Naive thymus-derived CD4-positive, alpha-beta T cell (primary cell): ENCODE measurements at regions of chr2 and their contacts with region 1.

Region 1: DNA sequence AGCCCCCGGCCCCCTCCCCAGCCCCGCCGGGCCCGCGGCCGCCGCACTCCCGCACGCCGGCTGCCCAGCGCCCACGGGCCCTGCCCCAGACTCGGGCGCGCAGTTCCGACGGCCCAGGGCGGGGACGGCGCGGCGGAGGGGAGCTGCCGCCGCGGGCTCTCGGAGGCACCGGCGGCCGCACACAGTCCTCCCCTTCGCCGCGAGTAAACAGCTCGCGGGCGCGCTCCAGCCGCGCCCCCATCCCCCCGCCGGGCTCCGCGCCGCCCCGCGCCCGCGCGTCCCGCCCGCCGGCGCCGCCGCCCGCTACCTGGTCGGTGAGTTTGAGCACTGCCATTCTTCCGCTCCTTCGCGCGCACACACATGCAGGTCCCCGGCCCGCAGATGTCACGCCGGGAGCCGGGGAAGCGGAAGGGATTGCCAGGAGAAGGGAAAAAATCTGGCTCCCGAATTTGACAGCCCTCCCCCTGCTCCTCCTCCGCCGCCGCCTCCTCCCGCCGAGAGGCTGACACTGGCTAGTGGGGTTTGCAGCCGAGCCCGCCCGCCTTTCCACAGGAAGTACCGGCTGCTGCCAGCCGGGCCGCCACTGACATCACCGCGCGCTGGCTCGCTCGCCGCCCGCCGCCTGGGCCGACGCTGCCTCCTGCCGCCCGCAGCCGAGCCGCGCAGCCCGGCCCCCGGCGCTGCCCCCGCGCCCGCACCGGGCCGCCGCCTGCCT is at the start of gene ANKRD44:
- DNase-seq: peak; percentile 86 to 94 (median 91)
- ATAC-seq: peak; percentile 88
- H3K4me3 ChIP-seq: peak within 1 kb of the TSS; percentile 90
- H3K4me3 Mint-ChIP-seq: peak within 1 kb of the TSS; percentile 89 to 98 (median 94)
- H3K27ac ChIP-seq: peak within 1 kb of the TSS; percentile 85
- H3K27ac Mint-ChIP-seq: peak within 1 kb of the TSS; percentile 93 to 99 (median 95)
- H3K4me1 ChIP-seq: peaks cover 34 to 43% of the 10 kb centered on the region in 2 donors
- H3K4me1 Mint-ChIP-seq: peaks cover 35 to 74% (median 68%) of the 10 kb centered on the region in 7 donors
- H3K27me3 ChIP-seq: no peaks in the 10 kb centered on the region
- H3K27me3 Mint-ChIP-seq: no peaks in the 10 kb centered on the region
- total RNA-seq, gene ANKRD44: 234 to 296 (median 291) TPM

Region 2: GRCh38 chr2:197052356-197052755 is 258.1 kb before region 1 on chr2:
- CTCF ChIA-PET with region 1: no interaction called
- POLR2A ChIA-PET with region 1: no interaction called
- intact Hi-C with region 1: no loop called
- DNase-seq: no peak
- ATAC-seq: peak; percentile 56
- H3K4me3 ChIP-seq: no peak overlapping the region
- H3K4me3 Mint-ChIP-seq: no peak overlapping the region
- H3K27ac ChIP-seq: no peak overlapping the region
- H3K27ac Mint-ChIP-seq: peak overlapping the region in 4 of 9 donors; percentile 14 to 51 (median 27)
- H3K4me1 ChIP-seq: no peaks in the 10 kb centered on the region
- H3K4me1 Mint-ChIP-seq: peaks cover 0 to 8% (median 0%) of the 10 kb centered on the region in 7 donors
- H3K27me3 ChIP-seq: no peaks in the 10 kb centered on the region
- H3K27me3 Mint-ChIP-seq: no peaks in the 10 kb centered on the region

Region 3: GRCh38 chr2:197113275-197113711 is 197.1 kb before region 1 on chr2:
- CTCF ChIA-PET with region 1: interaction called, 24 read pairs
- POLR2A ChIA-PET with region 1: interaction called, 4 read pairs
- intact Hi-C with region 1: loop called (anchors 1 kb)
- DNase-seq: peak in 7 of 9 donors; percentile 22 to 58 (median 42)
- ATAC-seq: peak; percentile 70
- H3K4me3 ChIP-seq: no peak overlapping the region
- H3K4me3 Mint-ChIP-seq: no peak overlapping the region
- H3K27ac ChIP-seq: peak overlapping the region; percentile 1
- H3K27ac Mint-ChIP-seq: peak overlapping the region; percentile 36 to 95 (median 76)
- H3K4me1 ChIP-seq: peaks cover 0 to 13% of the 10 kb centered on the region in 2 donors
- H3K4me1 Mint-ChIP-seq: peaks cover 21 to 43% (median 38%) of the 10 kb centered on the region in 7 donors
- H3K27me3 ChIP-seq: no peaks in the 10 kb centered on the region
- H3K27me3 Mint-ChIP-seq: no peaks in the 10 kb centered on the region

Region 4: GRCh38 chr2:197209742-197210408 is 100.6 kb before region 1 on chr2:
- CTCF ChIA-PET with region 1: interaction called, 19 read pairs
- POLR2A ChIA-PET with region 1: interaction called, 119 read pairs
- intact Hi-C with region 1: loop called (anchors 1 kb)
- DNase-seq: peak in 5 of 9 donors; percentile 34 to 73 (median 50)
- ATAC-seq: peak; percentile 23
- H3K4me3 ChIP-seq: peak overlapping the region; percentile 12
- H3K4me3 Mint-ChIP-seq: peak overlapping the region; percentile 61 to 86 (median 78)
- H3K27ac ChIP-seq: peak overlapping the region; percentile 82
- H3K27ac Mint-ChIP-seq: peak overlapping the region; percentile 79 to 100 (median 98)
- H3K4me1 ChIP-seq: peaks cover 93 to 98% of the 10 kb centered on the region in 2 donors
- H3K4me1 Mint-ChIP-seq: peaks cover 76 to 99% (median 97%) of the 10 kb centered on the region in 7 donors
- H3K27me3 ChIP-seq: no peaks in the 10 kb centered on the region
- H3K27me3 Mint-ChIP-seq: no peaks in the 10 kb centered on the region

Region 5: GRCh38 chr2:197255543-197255942 is 54.9 kb before region 1 on chr2:
- CTCF ChIA-PET with region 1: interaction called, 22 read pairs
- POLR2A ChIA-PET with region 1: interaction called, 34 read pairs
- intact Hi-C with region 1: loop called (anchors 1 kb)
- DNase-seq: peak in 7 of 9 donors; percentile 47 to 83 (median 56)
- ATAC-seq: peak; percentile 96
- H3K4me3 ChIP-seq: peak overlapping the region; percentile 38
- H3K4me3 Mint-ChIP-seq: peak overlapping the region; percentile 69 to 88 (median 77)
- H3K27ac ChIP-seq: peak overlapping the region; percentile 80
- H3K27ac Mint-ChIP-seq: peak overlapping the region; percentile 84 to 98 (median 94)
- H3K4me1 ChIP-seq: peaks cover 68 to 74% of the 10 kb centered on the region in 2 donors
- H3K4me1 Mint-ChIP-seq: peaks cover 58 to 98% (median 82%) of the 10 kb centered on the region in 7 donors
- H3K27me3 ChIP-seq: no peaks in the 10 kb centered on the region
- H3K27me3 Mint-ChIP-seq: no peaks in the 10 kb centered on the region

Region 6: DNA sequence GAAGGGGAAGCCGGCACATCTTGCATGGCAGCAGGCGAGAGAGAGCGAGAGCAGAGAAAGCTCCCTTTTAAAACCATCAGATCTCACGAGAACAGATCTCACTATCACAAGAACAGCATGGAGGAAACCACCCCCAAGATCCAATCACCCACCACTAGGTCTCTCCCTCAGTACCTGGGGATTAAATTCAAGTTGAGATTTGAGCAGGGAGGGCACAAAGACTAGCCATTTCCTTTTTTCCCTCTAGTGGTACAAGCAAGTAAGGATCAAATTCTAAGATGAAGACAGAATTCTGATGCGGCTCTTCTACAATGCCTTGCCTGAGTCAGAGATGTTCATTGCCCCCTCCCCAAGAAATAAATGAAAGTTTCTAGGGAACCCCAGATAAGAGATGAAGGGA is 45.7 kb after region 1 on chr2:
- CTCF ChIA-PET with region 1: interaction called, 9 read pairs
- POLR2A ChIA-PET with region 1: interaction called, 4 read pairs
- intact Hi-C with region 1: loop called (anchors 1 to 5 kb)
- DNase-seq: peak in 5 of 9 donors; percentile 25 to 42 (median 39)
- ATAC-seq: peak; percentile 70
- H3K4me3 ChIP-seq: no peak overlapping the region
- H3K4me3 Mint-ChIP-seq: peak overlapping the region in 8 of 10 donors; percentile 6 to 57 (median 30)
- H3K27ac ChIP-seq: no peak overlapping the region
- H3K27ac Mint-ChIP-seq: peak overlapping the region in 7 of 9 donors; percentile 1 to 82 (median 31)
- H3K4me1 ChIP-seq: peaks cover 0 to 10% of the 10 kb centered on the region in 2 donors
- H3K4me1 Mint-ChIP-seq: peaks cover 5 to 35% (median 30%) of the 10 kb centered on the region in 7 donors
- H3K27me3 ChIP-seq: no peaks in the 10 kb centered on the region
- H3K27me3 Mint-ChIP-seq: no peaks in the 10 kb centered on the region

Region 7: GRCh38 chr2:197506658-197507057 is 196.2 kb after region 1 on chr2:
- CTCF ChIA-PET with region 1: no interaction called
- POLR2A ChIA-PET with region 1: no interaction called
- intact Hi-C with region 1: no loop called
- DNase-seq: no peak
- ATAC-seq: no peak
- H3K4me3 ChIP-seq: no peak overlapping the region
- H3K4me3 Mint-ChIP-seq: no peak overlapping the region
- H3K27ac ChIP-seq: no peak overlapping the region
- H3K27ac Mint-ChIP-seq: peak overlapping the region in 1 of 9 donors; percentile 34
- H3K4me1 ChIP-seq: peaks cover 5 to 11% of the 10 kb centered on the region in 2 donors
- H3K4me1 Mint-ChIP-seq: peaks cover 12 to 30% (median 25%) of the 10 kb centered on the region in 7 donors
- H3K27me3 ChIP-seq: no peaks in the 10 kb centered on the region
- H3K27me3 Mint-ChIP-seq: no peaks in the 10 kb centered on the region